T-cell (primary cell): ENCODE measurements at regions of chr7 and their contacts with region 1.

Region 1: DNA sequence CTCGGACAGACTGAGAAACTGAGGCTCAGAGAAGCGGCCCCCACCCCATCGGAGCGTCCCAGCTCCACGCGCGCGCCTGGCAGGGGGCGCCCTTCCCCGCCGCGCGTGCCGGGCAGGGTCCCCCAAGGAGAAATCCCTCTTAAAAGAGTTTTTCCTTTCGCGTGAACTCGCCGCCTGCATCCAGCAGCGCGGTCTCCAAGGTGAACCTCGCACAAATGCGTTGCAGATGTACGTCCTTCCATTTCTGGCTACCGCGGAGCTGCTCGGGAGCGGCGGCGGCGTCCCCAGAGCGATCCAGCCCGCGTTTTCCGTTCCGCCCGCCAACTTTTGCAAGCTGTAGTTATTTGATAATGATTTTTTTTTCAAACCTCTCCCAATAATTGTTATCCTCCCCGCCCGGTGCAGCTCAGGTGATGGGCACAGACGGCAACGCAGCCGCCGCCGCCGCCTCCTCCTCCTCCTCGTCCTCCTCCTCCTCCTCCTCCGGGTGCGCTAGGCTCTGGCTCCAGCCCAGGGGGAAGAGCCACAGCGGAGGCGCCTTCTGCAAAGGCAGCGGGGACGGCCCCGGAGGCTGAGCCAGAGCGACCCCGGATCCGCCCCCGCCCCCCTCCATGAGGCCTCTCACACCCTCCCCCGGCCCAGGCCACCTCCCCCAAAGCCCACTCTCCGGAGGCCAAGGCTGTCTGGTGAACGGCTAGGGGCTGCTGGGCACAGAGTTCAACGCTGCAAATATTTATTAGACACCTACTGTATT is 74.0 kb upstream of the CUX1 start:
- DNase-seq: peak; percentile 44 to 77 (median 64)
- ATAC-seq: peak; percentile 79 to 86 (median 81)
- H3K4me3 ChIP-seq: peak overlapping the region; percentile 52 to 85
- H3K4me3 Mint-ChIP-seq: peak overlapping the region; percentile 72 to 77 (median 76)
- H3K27ac ChIP-seq: no peak overlapping the region
- H3K27ac Mint-ChIP-seq: no peak overlapping the region
- H3K4me1 ChIP-seq: peaks cover 10 to 49% of the 10 kb centered on the region in 2 experiments
- H3K4me1 Mint-ChIP-seq: peaks cover 12 to 29% (median 20%) of the 10 kb centered on the region in 3 donors
- H3K27me3 ChIP-seq: peaks cover 0 to 30% of the 10 kb centered on the region in 2 experiments
- H3K27me3 Mint-ChIP-seq: peaks cover 0 to 3% of the 10 kb centered on the region in 2 donors

Region 2: DNA sequence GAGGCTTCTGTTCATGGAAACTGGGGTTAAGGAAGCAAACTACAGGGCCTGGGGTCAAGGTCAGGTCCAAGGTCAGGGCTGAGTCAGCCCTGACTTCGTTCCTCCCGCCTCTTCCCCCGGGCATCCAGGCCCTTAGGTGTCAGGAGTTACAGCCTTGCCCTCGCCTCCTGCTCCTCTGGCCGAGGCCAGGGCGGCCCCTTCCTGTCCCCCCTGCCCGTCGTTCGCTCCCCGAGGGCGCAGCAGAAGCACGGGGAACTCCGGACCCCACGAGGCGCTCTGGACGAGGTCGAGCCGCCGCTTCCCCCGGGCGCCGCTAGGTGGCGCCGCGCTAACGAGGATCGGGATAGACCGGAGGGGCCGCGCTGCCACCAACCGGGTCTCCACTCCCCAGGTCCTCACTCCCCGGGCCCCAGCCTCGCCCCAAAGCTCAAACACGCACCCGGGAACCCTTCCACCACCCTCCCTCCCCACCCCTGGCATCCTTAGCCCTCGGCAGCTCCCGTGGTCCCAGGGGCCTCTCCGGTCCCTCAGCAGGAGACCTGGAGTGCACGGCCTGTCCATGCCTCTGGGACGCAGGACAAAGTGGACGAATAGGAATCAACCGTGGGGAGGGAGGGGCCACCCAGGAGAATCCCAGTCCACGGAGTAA is 55.1 kb before region 1 on chr7:
- CTCF ChIA-PET with region 1: no interaction called
- POLR2A ChIA-PET with region 1: no interaction called
- DNase-seq: peak; percentile 13 to 85 (median 72)
- ATAC-seq: peak; percentile 81 to 95 (median 88)
- H3K4me3 ChIP-seq: no peak overlapping the region
- H3K4me3 Mint-ChIP-seq: no peak overlapping the region
- H3K27ac ChIP-seq: no peak overlapping the region
- H3K27ac Mint-ChIP-seq: no peak overlapping the region
- H3K4me1 ChIP-seq: peaks cover 0 to 8% of the 10 kb centered on the region in 2 experiments
- H3K4me1 Mint-ChIP-seq: peaks cover 0 to 2% (median 1%) of the 10 kb centered on the region in 3 donors
- H3K27me3 ChIP-seq: peaks cover 0 to 19% of the 10 kb centered on the region in 2 experiments
- H3K27me3 Mint-ChIP-seq: peaks cover 0 to 5% of the 10 kb centered on the region in 2 donors

Region 3: GRCh38 chr7:101792051-101792681 is 48.7 kb after region 1 on chr7:
- CTCF ChIA-PET with region 1: no interaction called
- POLR2A ChIA-PET with region 1: no interaction called
- DNase-seq: no peak
- ATAC-seq: no peak
- H3K4me3 ChIP-seq: no peak overlapping the region
- H3K4me3 Mint-ChIP-seq: no peak overlapping the region
- H3K27ac ChIP-seq: no peak overlapping the region
- H3K27ac Mint-ChIP-seq: no peak overlapping the region
- H3K4me1 ChIP-seq: no peaks in the 10 kb centered on the region
- H3K4me1 Mint-ChIP-seq: no peaks in the 10 kb centered on the region
- H3K27me3 ChIP-seq: no peaks in the 10 kb centered on the region
- H3K27me3 Mint-ChIP-seq: peaks cover 0 to 3% of the 10 kb centered on the region in 2 donors

Region 4: DNA sequence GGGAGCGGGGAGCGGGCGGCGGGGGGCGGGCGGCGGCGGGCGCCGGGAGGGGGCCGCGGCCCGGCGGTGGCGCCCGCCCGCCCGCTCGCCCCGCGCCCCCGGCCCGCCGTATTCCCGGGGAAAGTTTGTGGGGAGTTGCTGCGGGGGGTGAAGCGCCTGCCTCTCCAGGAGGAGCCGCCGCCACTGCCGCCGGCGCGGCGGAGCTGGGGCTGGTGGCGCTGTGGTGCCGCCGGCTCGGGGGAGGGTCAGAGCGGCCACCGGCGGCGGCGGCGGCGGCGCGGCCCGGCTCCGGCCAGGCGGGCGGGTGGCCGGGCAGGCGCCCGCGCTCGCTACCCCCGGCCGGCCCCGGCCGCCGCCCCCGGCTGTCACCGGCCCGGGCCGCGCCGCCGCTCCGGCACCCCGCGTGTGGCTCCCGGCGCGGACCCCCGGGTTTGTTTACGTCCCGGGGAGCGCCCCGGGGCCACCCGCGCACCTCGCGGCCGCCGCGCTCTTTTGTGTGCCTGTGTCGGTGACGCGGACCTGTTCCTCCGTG is 73.1 kb after region 1 on chr7:
- CTCF ChIA-PET with region 1: interaction called, 8 to 11 read pairs
- POLR2A ChIA-PET with region 1: interaction called, 3 read pairs
- DNase-seq: peak in 9 of 35 experiments; percentile 8 to 50 (median 20)
- ATAC-seq: no peak
- H3K4me3 ChIP-seq: peak overlapping the region; percentile 32 to 61
- H3K4me3 Mint-ChIP-seq: peak overlapping the region in 2 of 3 donors; percentile 13 to 45
- H3K27ac ChIP-seq: no peak overlapping the region
- H3K27ac Mint-ChIP-seq: no peak overlapping the region
- H3K4me1 ChIP-seq: peaks cover 8 to 12% of the 10 kb centered on the region in 2 experiments
- H3K4me1 Mint-ChIP-seq: peaks cover 33 to 36% (median 34%) of the 10 kb centered on the region in 3 donors
- H3K27me3 ChIP-seq: no peaks in the 10 kb centered on the region
- H3K27me3 Mint-ChIP-seq: no peaks in the 10 kb centered on the region

Region 5: GRCh38 chr7:101828301-101829020 is 85.0 kb after region 1 on chr7:
- CTCF ChIA-PET with region 1: interaction called, 6 to 12 read pairs
- POLR2A ChIA-PET with region 1: no interaction called
- DNase-seq: no peak
- ATAC-seq: no peak
- H3K4me3 ChIP-seq: no peak overlapping the region
- H3K4me3 Mint-ChIP-seq: no peak overlapping the region
- H3K27ac ChIP-seq: no peak overlapping the region
- H3K27ac Mint-ChIP-seq: no peak overlapping the region
- H3K4me1 ChIP-seq: no peaks in the 10 kb centered on the region
- H3K4me1 Mint-ChIP-seq: peaks cover 26 to 36% (median 35%) of the 10 kb centered on the region in 3 donors
- H3K27me3 ChIP-seq: no peaks in the 10 kb centered on the region
- H3K27me3 Mint-ChIP-seq: no peaks in the 10 kb centered on the region

Region 6: DNA sequence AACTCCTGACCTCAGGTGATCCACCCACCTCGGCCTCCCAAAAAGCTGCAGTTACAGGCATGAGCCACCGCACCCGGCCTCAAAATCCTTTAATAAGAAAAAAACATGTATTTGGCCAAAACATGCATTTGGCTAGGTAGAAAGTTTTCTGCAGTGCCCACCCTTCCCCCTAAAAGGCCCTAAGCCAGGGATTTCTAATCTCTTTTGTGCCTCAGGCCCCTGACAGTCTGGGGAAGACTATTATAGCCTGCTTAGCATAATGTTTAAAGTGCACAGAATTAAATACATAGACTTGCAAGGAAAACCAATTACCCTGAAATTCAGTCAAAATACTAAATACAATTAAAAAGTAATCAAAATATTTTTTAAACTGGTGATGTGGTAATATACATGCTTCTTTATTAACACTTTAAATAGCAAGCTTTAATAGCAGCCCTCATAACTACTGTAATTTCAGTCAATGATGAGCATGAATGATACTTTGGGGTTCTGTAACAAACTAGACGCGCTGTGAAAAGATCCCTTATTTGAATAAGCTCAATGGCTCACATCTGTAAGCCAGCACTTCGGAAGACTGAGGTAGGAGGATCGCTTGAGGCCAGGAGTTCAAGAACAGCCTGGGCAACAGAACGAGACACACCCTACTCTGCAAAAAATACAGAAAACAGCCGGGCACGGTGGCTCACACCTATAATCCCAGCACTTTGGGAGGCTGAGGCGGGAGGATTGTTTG is 582.9 kb after region 1 on chr7:
- CTCF ChIA-PET with region 1: interaction called in 1 of 2 experiments, 13 read pairs
- POLR2A ChIA-PET with region 1: no interaction called
- DNase-seq: no peak
- ATAC-seq: no peak
- H3K4me3 ChIP-seq: no peak overlapping the region
- H3K4me3 Mint-ChIP-seq: no peak overlapping the region
- H3K27ac ChIP-seq: no peak overlapping the region
- H3K27ac Mint-ChIP-seq: no peak overlapping the region
- H3K4me1 ChIP-seq: no peaks in the 10 kb centered on the region
- H3K4me1 Mint-ChIP-seq: peaks cover 0 to 6% (median 0%) of the 10 kb centered on the region in 3 donors
- H3K27me3 ChIP-seq: peaks cover 0 to 16% of the 10 kb centered on the region in 2 experiments
- H3K27me3 Mint-ChIP-seq: peaks cover 0 to 21% of the 10 kb centered on the region in 2 donors